Activated naive CD4-positive, alpha-beta T cell treated with anti-CD3 and anti-CD28 coated beads for 36 hours (primary cell): ENCODE measurements at regions of chr3 and their contacts with region 1.

Region 1: GRCh38 chr3:50235716-50236496 is at the start of gene GNAI2:
- DNase-seq: peak; percentile 99
- H3K4me3 Mint-ChIP-seq: peak within 1 kb of the TSS; percentile 95
- H3K27ac Mint-ChIP-seq: peak within 1 kb of the TSS; percentile 92
- H3K4me1 Mint-ChIP-seq: peaks cover 33% of the 10 kb centered on the region
- H3K27me3 Mint-ChIP-seq: no peaks in the 10 kb centered on the region
- total RNA-seq, gene GNAI2: 272 to 276 TPM

Region 2: GRCh38 chr3:50245831-50246516 is 10.1 kb after region 1 on chr3:
- CTCF ChIA-PET with region 1: interaction called, 119 read pairs
- intact Hi-C with region 1: loop called (anchors 1 kb)
- DNase-seq: peak; percentile 97
- H3K4me3 Mint-ChIP-seq: peak overlapping the region; percentile 81
- H3K27ac Mint-ChIP-seq: peak overlapping the region; percentile 95
- H3K4me1 Mint-ChIP-seq: peaks cover 82% of the 10 kb centered on the region
- H3K27me3 Mint-ChIP-seq: no peaks in the 10 kb centered on the region

Region 3: DNA sequence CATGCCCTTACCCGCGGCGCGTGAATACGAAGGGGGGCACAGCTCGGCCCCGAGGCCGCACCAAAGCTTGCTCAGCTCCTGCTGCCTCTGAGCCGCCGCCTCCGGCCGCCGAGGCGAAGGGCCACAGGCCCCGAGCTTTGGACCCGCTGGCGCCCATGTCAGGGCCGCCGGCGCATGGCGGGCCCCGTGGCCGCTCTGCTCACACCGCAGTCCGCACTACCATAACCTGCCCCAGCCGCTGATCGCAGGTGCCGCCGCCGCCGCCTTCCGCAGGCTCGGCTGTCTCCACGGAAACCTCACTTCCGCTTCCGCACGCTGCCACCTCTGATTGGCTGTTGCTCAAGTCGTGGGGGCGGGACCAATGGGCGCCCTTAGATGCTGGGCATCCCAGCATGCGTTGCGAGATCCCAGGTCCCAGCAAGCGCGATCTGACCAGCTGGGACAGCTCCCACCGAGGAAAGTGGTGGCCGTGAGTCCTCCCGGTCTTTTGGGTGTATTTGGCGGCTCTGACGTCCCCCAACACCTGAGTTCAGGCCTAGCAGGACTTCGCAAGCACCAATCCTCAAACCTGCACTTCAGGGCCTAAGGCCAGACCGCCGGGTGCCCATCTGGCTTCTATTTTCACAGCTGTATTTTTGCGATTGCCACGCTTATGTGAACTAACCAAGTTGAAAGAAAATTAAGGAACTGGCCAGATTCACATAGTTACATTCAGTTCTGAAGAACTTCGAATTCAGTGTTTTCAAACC is 92.2 kb after region 1 on chr3 and contains the start of gene TUSC2:
- CTCF ChIA-PET with region 1: no interaction called
- intact Hi-C with region 1: loop called (anchors 2 kb)
- DNase-seq: peak; percentile 98
- H3K4me3 Mint-ChIP-seq: peak within 1 kb of the TSS; percentile 88
- H3K27ac Mint-ChIP-seq: peak within 1 kb of the TSS; percentile 80
- H3K4me1 Mint-ChIP-seq: peaks cover 16% of the 10 kb centered on the region
- H3K27me3 Mint-ChIP-seq: no peaks in the 10 kb centered on the region
- total RNA-seq, gene TUSC2: 14.1 to 14.4 TPM